ENCODE measurements at regions of chr2 and their contacts with region 1.

Region 1: DNA sequence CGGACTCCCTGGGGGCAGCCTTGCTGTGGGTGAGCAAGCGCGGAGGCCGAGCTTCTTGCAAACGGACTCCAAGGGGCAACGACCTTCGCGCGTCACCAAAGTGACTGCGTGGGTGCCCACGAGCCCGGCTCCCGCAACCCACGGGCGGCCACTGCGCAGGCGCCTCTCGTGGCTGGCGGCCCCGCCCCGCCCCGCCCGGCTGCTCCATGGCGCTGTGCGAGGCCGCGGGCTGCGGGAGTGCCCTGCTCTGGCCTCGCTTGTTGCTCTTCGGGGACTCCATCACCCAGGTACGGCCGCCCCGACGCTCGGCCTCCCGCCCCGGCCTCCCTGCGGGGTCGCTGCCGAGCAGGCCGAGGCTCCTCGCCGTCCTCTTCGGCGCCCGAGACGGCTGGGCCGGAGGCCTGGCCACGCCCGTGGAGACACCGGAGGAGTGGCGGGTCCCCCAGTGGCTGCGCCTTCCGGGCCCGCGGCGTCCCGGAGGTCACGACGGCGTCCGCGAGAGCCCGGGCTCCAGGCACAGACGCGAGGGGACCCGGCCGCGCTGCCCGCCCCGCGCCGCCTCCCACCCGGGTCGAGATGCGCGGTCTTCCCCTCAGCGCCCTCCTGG is at the start of gene IAH1:
- DNase-seq: peak; percentile 23 to 90 (median 78)

Region 2: DNA sequence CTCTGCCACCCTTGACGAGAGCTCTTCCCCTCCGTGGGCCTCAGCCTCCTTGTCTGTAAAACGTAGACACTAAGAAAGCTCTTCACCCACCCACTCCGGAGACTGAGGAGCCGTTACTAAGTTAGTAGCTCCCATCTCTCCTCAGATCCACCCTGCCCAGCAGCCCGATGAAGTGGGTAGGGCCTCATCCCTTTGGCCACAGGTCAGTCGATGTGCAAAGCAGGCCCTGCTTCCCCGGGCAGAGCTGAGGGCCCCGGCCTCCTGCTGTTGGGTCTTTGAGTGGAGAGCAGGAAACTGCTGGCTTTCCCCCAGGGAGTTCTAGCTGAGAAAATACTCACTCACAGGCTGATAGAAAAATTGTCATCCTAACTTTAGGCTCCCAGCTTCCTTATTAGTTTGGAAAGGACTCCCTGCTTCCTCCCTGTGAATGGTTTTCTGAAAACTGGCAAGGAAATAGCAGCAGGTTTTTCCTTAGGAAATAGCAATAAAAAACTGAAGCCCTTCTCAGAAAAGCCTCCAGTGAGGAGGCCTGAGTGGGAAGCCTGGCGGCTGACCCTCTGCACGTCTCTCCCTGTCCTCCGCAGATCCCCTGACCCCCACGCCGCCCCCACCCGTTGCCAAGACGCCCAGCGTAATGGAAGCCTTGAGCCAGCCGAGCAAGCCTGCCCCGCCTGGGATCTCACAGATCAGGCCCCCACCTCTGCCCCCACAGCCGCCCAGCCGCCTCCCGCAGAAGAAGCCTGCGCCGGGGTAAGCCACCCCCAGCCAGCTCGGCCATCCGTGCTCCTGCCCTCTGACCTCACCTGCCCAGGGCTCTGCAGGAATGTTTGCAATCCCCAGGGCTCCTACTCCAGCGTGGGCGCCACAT is 81.3 kb before region 1 on chr2:
- intact Hi-C with region 1: no loop called
- DNase-seq: peak in 11 of 42 donors; percentile 16 to 66 (median 42)

Region 3: GRCh38 chr2:9423100-9423921 is 51.2 kb before region 1 on chr2 and contains the starts of genes CPSF3 and ITGB1BP1:
- intact Hi-C with region 1: loop called (anchors 10 kb)
- DNase-seq: peak; percentile 88 to 99 (median 98)

Region 4: GRCh38 chr2:9555297-9556141 is 81.1 kb after region 1 on chr2 and contains the start of gene ADAM17:
- intact Hi-C with region 1: loop called (anchors 10 kb)
- DNase-seq: peak; percentile 78 to 95 (median 91)

Region 5: GRCh38 chr2:9630749-9631483 is 156.5 kb after region 1 on chr2 and contains the start of gene YWHAQ:
- intact Hi-C with region 1: loop called (anchors 10 kb)
- DNase-seq: peak; percentile 95 to 100 (median 99)

Measured in head of caudate nucleus (tissue), 42 donors.